Activated CD4-positive, alpha-beta memory T cell treated with anti-CD3 and anti-CD28 coated beads for 36 hours (primary cell): ENCODE measurements at regions of chr9 and their contacts with region 1.

Region 1: GRCh38 chr9:135907431-135908092 is at the start of gene CAMSAP1:
- DNase-seq: peak; percentile 97
- H3K4me3 Mint-ChIP-seq: peak within 1 kb of the TSS; percentile 82
- H3K27ac Mint-ChIP-seq: peak within 1 kb of the TSS; percentile 86
- H3K4me1 Mint-ChIP-seq: peaks cover 62% of the 10 kb centered on the region
- H3K27me3 Mint-ChIP-seq: no peaks in the 10 kb centered on the region
- total RNA-seq, gene CAMSAP1: 43.2 to 46.0 TPM

Region 2: GRCh38 chr9:135864447-135865049 is 43.0 kb before region 1 on chr9:
- CTCF ChIA-PET with region 1: interaction called, 5 read pairs
- POLR2A ChIA-PET with region 1: no interaction called
- intact Hi-C with region 1: loop called (anchors 1 kb)
- DNase-seq: peak; percentile 81
- H3K4me3 Mint-ChIP-seq: no peak overlapping the region
- H3K27ac Mint-ChIP-seq: no peak overlapping the region
- H3K4me1 Mint-ChIP-seq: peaks cover 51% of the 10 kb centered on the region
- H3K27me3 Mint-ChIP-seq: no peaks in the 10 kb centered on the region

Region 3: GRCh38 chr9:135926402-135927194 is 19.0 kb after region 1 on chr9:
- CTCF ChIA-PET with region 1: no interaction called
- POLR2A ChIA-PET with region 1: interaction called, 9 read pairs
- intact Hi-C with region 1: loop called (anchors 1 kb)
- DNase-seq: peak; percentile 96
- H3K4me3 Mint-ChIP-seq: no peak overlapping the region
- H3K27ac Mint-ChIP-seq: peak overlapping the region; percentile 93
- H3K4me1 Mint-ChIP-seq: peaks cover 34% of the 10 kb centered on the region
- H3K27me3 Mint-ChIP-seq: no peaks in the 10 kb centered on the region

Region 4: GRCh38 chr9:135961277-135961705 is 53.7 kb after region 1 on chr9 and contains the start of gene UBAC1:
- CTCF ChIA-PET with region 1: interaction called, 3 read pairs
- POLR2A ChIA-PET with region 1: interaction called, 4 read pairs
- intact Hi-C with region 1: loop called (anchors 2 kb)
- DNase-seq: peak; percentile 96
- H3K4me3 Mint-ChIP-seq: peak within 1 kb of the TSS; percentile 87
- H3K27ac Mint-ChIP-seq: peak within 1 kb of the TSS; percentile 66
- H3K4me1 Mint-ChIP-seq: peaks cover 35% of the 10 kb centered on the region
- H3K27me3 Mint-ChIP-seq: peaks cover 1% of the 10 kb centered on the region
- total RNA-seq, gene UBAC1: 41.3 to 42.0 TPM

Region 5: DNA sequence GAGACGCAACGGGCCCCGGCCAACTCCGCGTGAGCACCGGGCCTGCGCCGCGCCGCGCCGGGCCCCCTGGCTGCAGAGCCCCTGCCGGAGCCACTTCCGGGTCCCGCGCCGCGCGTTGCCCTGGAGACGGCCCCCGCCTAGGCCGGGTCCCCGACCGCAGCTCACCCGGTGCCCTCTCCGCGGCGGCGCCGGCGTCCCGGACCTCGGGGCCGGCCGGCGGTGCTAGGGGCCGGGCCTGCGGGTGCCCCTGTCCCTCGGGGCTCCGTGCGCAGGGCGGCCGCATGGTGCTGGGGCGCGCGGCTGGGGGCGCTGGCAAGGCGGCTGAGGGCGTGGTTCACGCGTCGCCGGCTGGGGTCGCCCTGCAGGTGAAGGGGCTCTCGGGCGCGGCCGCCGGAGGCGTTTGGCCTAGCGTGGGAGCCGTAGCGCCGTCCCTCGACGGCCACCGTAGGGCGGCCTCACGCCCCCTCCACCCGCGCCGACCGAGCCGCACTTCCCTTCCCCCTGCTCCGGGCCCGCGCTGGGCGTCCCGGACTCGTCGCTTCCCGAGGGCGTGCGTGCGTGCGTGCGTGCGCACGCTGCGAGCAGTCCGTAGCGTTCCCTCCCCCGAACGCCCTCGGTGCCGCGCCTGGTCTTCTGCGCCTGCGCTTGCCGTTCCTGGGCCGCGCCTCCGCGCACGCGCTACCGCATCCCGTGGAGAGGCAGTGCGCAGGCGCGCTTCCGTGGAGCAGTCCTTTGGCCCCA is 210.9 kb after region 1 on chr9 and contains the start of gene TMEM250:
- CTCF ChIA-PET with region 1: no interaction called
- POLR2A ChIA-PET with region 1: no interaction called
- intact Hi-C with region 1: loop called (anchors 1 kb)
- DNase-seq: peak; percentile 97
- H3K4me3 Mint-ChIP-seq: peak within 1 kb of the TSS; percentile 84
- H3K27ac Mint-ChIP-seq: peak within 1 kb of the TSS; percentile 87
- H3K4me1 Mint-ChIP-seq: peaks cover 30% of the 10 kb centered on the region
- H3K27me3 Mint-ChIP-seq: no peaks in the 10 kb centered on the region
- total RNA-seq, gene TMEM250: 28.0 to 28.4 TPM

Region 6: DNA sequence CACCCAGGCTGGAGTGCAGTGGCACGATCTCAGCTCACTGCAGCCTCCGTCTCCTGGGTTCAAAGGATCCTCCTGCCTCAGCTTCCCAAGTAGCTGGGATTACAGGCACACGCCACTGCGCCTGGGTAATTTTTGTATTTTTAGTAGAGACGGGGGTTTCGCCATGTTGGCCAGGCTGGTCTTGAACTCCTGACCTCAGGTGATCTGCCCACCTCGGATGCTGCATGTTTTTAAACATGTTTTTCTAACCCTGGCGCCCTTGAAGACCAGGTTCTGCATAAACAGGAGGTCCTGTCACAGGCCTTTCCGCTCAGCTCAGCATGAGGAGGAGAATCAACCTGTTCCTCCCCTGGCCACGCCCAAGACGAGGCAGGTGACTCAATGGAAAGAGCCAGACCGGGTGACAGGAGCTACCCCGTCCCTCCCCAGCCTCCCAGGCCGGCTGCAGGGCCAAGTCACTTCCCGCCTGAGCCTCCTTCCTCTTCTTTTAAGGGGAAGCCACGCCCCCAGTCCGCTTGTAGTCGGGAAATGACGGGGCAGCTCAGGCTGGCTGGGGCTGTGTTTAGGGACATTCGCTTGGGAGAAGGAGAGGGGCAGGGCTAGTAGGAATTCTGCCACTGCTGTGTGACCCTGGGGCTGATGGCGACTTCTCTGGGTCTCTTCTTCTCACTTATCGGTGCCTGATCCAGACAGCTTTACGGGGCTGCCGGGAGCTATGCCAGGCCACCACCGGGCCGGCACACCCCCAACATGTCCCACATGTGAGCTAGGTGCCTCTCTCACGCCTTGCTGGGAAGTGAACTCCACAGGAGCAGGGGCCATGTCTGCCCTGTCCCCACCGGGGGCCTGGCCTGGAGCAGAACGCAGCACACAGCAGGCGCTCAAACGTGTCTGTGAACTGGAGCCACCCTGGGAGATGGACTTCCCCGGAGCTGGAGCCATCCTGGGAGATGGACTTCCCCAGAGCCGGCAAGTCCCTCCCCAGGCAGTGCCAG is 632.2 kb after region 1 on chr9:
- CTCF ChIA-PET with region 1: no interaction called
- POLR2A ChIA-PET with region 1: no interaction called
- intact Hi-C with region 1: loop called (anchors 5 kb)
- DNase-seq: peak; percentile 99
- H3K4me3 Mint-ChIP-seq: peak overlapping the region; percentile 78
- H3K27ac Mint-ChIP-seq: peak overlapping the region; percentile 99
- H3K4me1 Mint-ChIP-seq: peaks cover 73% of the 10 kb centered on the region
- H3K27me3 Mint-ChIP-seq: no peaks in the 10 kb centered on the region